AG04449 (cell line): ENCODE measurements at regions of chr17 and their contacts with region 1.

Region 1: DNA sequence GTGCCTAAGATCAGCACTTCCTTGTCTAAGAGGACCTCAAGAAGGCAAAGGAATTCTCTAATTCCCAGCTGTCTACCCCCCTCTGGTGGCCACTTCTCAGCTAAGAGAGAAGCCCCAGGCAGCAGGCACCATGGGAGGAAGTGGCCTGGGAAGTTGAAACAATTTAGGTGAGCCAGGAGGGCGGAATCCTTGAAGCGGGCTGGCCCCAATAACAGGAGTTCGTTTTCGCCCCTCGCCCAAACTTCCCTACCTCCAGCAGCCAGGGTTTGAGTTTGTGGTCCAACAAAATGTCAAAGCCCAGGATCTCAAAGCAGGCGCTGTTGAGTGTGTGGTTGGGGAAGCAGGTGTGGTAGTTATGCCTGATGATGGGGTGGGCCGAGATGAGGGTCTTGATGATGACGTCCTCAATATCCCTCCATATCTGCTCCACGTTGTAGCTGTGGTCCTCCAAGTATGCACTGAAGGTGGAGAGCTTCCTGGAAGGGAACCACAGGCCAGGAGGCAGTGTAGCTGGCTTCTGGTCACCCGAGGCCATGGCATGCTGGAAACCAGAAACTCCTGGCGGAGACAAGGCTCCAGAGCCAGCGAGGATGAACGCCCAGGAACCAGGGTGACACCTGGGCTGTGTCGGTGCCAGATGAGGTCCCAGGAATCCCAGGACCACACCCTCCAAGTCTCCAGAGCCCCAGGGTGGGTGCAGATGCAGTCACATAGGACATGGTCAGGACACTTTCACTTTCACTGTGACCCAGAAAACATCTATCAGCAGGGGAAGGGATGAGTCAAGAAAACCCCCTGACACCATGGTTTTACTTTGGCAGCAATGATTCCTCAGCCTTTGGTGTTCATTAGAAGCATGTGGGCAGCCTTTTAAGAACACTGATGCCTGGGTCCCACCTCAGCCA is 25.6 kb downstream of the TTLL6 start:
- DNase-seq: peak; percentile 45
- H3K4me3 ChIP-seq: no peak overlapping the region
- CTCF ChIP-seq: peak; percentile 82

Region 2: GRCh38 chr17:48618256-48618897 is 173.0 kb before region 1 on chr17:
- CTCF ChIA-PET with region 1: no interaction called
- POLR2A ChIA-PET with region 1: no interaction called
- DNase-seq: no peak
- H3K4me3 ChIP-seq: peak overlapping the region; percentile 29
- CTCF ChIP-seq: peak; percentile 88

Region 3: GRCh38 chr17:48671697-48672171 is 119.6 kb before region 1 on chr17:
- CTCF ChIA-PET with region 1: interaction called, 164 read pairs
- POLR2A ChIA-PET with region 1: no interaction called
- DNase-seq: peak; percentile 14
- H3K4me3 ChIP-seq: peak overlapping the region; percentile 43
- CTCF ChIP-seq: peak; percentile 81

Region 4: GRCh38 chr17:48779421-48779820 is 12.0 kb before region 1 on chr17:
- CTCF ChIA-PET with region 1: interaction called, 12 read pairs
- POLR2A ChIA-PET with region 1: no interaction called
- DNase-seq: no peak
- H3K4me3 ChIP-seq: no peak overlapping the region
- CTCF ChIP-seq: no peak